AG04450 (cell line): ENCODE measurements at regions of chr6 and their contacts with region 1.

Region 1: GRCh38 chr6:70566751-70567382 is at the start of gene SDHAF4:
- DNase-seq: peak; percentile 59
- H3K4me3 ChIP-seq: peak within 1 kb of the TSS; percentile 95
- H3K27ac ChIP-seq: peak within 1 kb of the TSS; percentile 21
- H3K27me3 ChIP-seq: no peaks in the 10 kb centered on the region
- CTCF ChIP-seq: peak; percentile 8; the same call in 1 of the 2 replicates
- polyA plus RNA-seq, gene SDHAF4: 7.4 and 8.3 TPM in 2 replicates

Region 2: DNA sequence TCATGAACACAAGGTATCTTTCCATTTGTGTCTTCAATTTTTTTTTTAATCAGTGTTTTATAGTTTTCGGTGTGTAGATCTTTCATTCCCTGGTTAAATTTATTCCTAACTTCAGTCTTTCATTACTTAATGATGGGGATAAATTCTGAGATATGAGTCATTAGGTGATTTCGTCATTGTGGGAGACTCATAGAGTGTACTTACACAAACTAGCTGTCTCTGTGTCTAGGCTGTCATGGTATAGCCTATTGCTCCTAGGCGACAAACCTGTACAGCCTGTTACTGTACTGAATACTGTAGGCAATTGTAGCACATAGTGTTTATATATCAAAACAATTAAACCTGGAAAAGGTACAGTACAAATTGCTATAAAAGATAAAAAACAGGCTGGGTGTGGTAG is 143.0 kb after region 1 on chr6:
- CTCF ChIA-PET with region 1: no interaction called
- POLR2A ChIA-PET with region 1: no interaction called
- DNase-seq: peak; percentile 46
- H3K4me3 ChIP-seq: no peak overlapping the region
- H3K27ac ChIP-seq: no peak overlapping the region
- H3K27me3 ChIP-seq: no peaks in the 10 kb centered on the region
- CTCF ChIP-seq: no peak

Region 3: GRCh38 chr6:70955441-70956190 is 388.7 kb after region 1 on chr6:
- CTCF ChIA-PET with region 1: interaction called, 12 read pairs
- POLR2A ChIA-PET with region 1: no interaction called
- DNase-seq: peak; percentile 27
- H3K4me3 ChIP-seq: peak overlapping the region; percentile 49
- H3K27ac ChIP-seq: no peak overlapping the region
- H3K27me3 ChIP-seq: peaks cover 48% of the 10 kb centered on the region
- CTCF ChIP-seq: peak; percentile 78